CD8-positive, alpha-beta T cell (primary cell): ENCODE measurements at regions of chr7 and their contacts with region 1.

Region 1: GRCh38 chr7:139767561-139767982 is 10.2 kb downstream of the HIPK2 start:
- DNase-seq: peak in 3 of 9 experiments; percentile 36 to 55 (median 55)
- ATAC-seq: peak; percentile 74
- H3K4me3 ChIP-seq: peak overlapping the region in 1 of 2 experiments; percentile 26
- H3K4me3 Mint-ChIP-seq: peak overlapping the region; percentile 59
- H3K27ac ChIP-seq: peak overlapping the region; percentile 59 to 74
- H3K27ac Mint-ChIP-seq: peak overlapping the region; percentile 91
- H3K4me1 ChIP-seq: peaks cover 33% of the 10 kb centered on the region
- H3K4me1 Mint-ChIP-seq: peaks cover 86% of the 10 kb centered on the region
- H3K27me3 ChIP-seq: no peaks in the 10 kb centered on the region
- H3K27me3 Mint-ChIP-seq: no peaks in the 10 kb centered on the region
- CTCF ChIP-seq: no peak

Region 2: GRCh38 chr7:139737221-139738100 is 30.1 kb before region 1 on chr7:
- CTCF ChIA-PET with region 1: no interaction called
- POLR2A ChIA-PET with region 1: interaction called, 11 read pairs
- intact Hi-C with region 1: no loop called
- DNase-seq: peak in 2 of 9 experiments; percentile 8 to 49
- ATAC-seq: peak; percentile 52
- H3K4me3 ChIP-seq: no peak overlapping the region
- H3K4me3 Mint-ChIP-seq: peak overlapping the region; percentile 55
- H3K27ac ChIP-seq: peak overlapping the region in 1 of 2 experiments; percentile 44
- H3K27ac Mint-ChIP-seq: peak overlapping the region; percentile 69
- H3K4me1 ChIP-seq: peaks cover 25% of the 10 kb centered on the region
- H3K4me1 Mint-ChIP-seq: peaks cover 63% of the 10 kb centered on the region
- H3K27me3 ChIP-seq: no peaks in the 10 kb centered on the region
- H3K27me3 Mint-ChIP-seq: no peaks in the 10 kb centered on the region
- CTCF ChIP-seq: no peak